Endothelial cell of umbilical vein (primary cell): ENCODE measurements at regions of chr12 and their contacts with region 1.

Region 1: GRCh38 chr12:132956011-132956788 is at the start of gene ZNF605:
- DNase-seq: peak; percentile 91
- H3K4me3 ChIP-seq: peak within 1 kb of the TSS; percentile 58 to 83 (median 75)
- H3K27ac ChIP-seq: peak within 1 kb of the TSS; percentile 50
- H3K4me1 ChIP-seq: peaks cover 8% of the 10 kb centered on the region
- H3K27me3 ChIP-seq: no peaks in the 10 kb centered on the region
- CTCF ChIP-seq: no peak
- POLR2A ChIP-seq: no peak
- total RNA-seq, gene ZNF605: 11.0 and 11.3 TPM in 2 replicates

Region 2: DNA sequence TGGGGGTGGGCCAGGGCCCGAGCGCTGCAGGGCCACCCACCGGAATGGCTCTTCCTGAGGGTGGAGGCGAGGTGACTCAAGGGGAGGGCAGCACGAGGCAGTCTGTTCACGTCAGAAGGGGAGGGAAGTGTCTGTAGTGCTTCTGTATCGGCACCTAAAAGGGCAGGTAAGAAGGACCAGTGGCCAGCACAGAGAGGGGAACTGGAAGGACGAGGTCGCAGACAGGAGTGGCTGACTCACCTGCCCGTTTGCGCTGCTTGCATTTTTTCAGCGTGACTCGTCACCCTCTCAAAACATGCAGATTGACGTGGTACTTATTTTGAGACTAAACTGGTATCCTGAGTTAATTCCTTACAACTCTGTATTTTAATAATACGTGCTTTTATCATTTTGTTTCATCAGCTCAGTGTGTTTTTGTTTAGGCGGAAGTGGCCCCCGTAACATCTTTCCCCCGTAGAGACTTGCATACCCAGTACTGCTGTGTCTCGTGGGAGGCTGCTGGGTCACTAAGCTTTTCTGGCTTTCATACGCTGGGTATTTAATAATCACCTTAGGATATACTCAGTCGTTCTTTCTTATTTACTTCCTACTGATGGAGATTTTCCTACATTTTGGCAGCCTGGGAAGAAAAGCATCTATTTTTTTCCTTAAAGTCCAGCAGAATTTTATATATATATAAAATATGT is 1218.9 kb before region 1 on chr12:
- CTCF ChIA-PET with region 1: no interaction called
- POLR2A ChIA-PET with region 1: interaction called, 10 read pairs
- dilution Hi-C with region 1: no loop called
- intact Hi-C with region 1: no loop called
- DNase-seq: peak; percentile 29
- H3K4me3 ChIP-seq: peak overlapping the region in 1 of 3 experiments; percentile 19
- H3K27ac ChIP-seq: peak overlapping the region; percentile 61
- H3K4me1 ChIP-seq: peaks cover 10% of the 10 kb centered on the region
- H3K27me3 ChIP-seq: no peaks in the 10 kb centered on the region
- CTCF ChIP-seq: no peak
- POLR2A ChIP-seq: no peak

Region 3: DNA sequence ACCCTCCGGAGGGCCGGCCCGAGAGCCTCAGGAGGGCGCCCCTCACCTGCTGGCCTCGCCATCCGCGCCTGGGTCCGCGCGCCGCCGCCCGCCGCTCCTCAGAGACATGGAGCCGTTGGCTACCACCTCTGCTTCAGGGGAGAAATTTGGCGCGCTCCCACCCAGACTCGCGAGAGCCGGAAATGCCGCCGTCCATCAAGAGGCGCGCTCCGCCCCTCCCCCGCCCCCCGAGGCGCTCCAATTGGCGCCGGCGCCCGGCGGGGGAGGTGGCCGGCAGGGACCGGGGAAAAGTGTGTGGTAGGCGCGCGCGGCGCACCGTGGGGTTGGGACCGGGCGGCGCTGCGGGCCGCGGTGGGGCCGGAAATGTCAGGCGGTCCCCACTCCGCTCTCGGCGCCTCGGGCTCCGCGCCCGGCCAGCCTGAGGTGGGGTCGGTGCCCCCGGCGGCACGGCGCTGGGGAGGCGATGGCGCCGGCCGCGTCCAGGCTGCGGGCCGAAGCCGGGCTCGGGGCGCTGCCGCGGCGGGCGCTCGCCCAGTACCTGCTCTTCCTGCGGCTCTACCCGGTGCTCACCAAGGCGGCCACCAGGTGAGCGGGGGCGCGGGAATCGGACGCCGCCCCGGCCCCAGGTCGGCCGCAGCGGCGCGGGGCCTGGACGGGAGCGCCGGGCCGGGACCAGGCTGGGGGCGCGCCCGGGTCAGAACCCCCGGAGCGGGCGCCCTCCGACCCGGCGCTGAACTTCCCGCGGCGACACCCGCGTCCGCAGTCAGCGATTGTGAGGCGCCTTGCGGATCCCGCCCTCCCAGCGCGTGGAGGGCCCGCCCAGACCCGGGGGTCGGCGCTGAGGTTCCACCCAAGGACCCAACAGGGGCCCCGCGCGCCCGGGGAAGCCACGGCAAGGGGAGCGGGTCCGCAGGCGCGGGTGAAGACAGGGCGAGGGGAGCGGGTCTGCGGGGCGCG is 268.7 kb before region 1 on chr12 and contains the starts of genes POLE and PXMP2:
- CTCF ChIA-PET with region 1: no interaction called
- POLR2A ChIA-PET with region 1: no interaction called
- dilution Hi-C with region 1: no loop called
- intact Hi-C with region 1: no loop called
- DNase-seq: peak; percentile 92
- H3K4me3 ChIP-seq: peak within 1 kb of the TSS; percentile 37 to 77 (median 62)
- H3K27ac ChIP-seq: peak within 1 kb of the TSS; percentile 62
- H3K4me1 ChIP-seq: no peaks in the 10 kb centered on the region
- H3K27me3 ChIP-seq: no peaks in the 10 kb centered on the region
- CTCF ChIP-seq: no peak
- POLR2A ChIP-seq: peak; percentile 70
- total RNA-seq, gene POLE: 73.7 and 82.7 TPM in 2 replicates
- total RNA-seq, gene PXMP2: 21.1 and 24.0 TPM in 2 replicates

Region 4: DNA sequence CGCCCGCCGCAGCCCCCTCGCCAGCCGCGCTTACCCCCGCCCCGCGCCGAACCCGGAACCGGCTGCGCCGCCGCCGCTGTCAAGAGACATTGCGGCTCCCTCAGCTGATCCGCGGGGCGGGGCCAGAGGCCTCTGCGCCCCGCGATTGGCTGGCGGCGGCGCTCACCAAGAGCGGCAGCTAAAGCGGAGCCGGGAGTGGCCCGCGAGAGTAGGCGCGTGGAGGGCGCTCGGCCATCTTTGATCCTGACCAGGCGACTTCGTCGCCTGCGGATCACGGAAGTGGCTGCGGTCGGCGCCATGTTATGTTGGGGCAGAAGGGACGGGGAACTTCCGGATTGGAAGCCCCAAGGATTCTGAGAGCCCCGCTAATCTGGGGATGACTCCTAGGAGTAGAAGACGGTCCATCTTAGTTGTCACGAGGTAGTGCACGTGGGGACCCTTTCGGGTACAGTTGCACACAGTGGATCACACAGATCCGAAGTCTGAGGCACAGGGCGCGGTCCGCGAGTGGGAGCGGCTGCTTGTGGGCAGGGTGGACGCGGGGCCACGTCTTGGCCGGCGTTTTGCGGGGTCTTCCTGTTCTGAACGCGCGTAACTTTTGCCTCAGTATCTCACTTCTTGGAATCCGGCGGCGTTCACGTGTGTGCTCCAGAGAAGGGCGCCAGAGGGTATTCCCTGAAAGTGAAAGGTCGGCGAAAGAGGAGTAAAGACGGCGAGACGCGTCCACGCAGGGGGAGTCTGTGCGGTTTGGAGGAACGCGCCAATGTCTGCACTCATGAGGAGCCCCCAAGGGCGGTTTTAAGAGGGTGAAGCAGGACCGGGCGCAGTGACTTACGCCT is 68.5 kb before region 1 on chr12 and contains the start of gene CHFR:
- CTCF ChIA-PET with region 1: no interaction called
- POLR2A ChIA-PET with region 1: no interaction called
- dilution Hi-C with region 1: no loop called
- intact Hi-C with region 1: loop called (anchors 2 kb)
- DNase-seq: peak; percentile 97
- H3K4me3 ChIP-seq: peak within 1 kb of the TSS; percentile 52 to 90 (median 67)
- H3K27ac ChIP-seq: peak within 1 kb of the TSS; percentile 69
- H3K4me1 ChIP-seq: no peaks in the 10 kb centered on the region
- H3K27me3 ChIP-seq: no peaks in the 10 kb centered on the region
- CTCF ChIP-seq: no peak
- POLR2A ChIP-seq: peak; percentile 65
- total RNA-seq, gene CHFR: 64.7 and 66.5 TPM in 2 replicates

Region 5: GRCh38 chr12:132986001-132986912 is 30.1 kb after region 1 on chr12 and contains the start of gene ZNF26:
- CTCF ChIA-PET with region 1: no interaction called
- POLR2A ChIA-PET with region 1: no interaction called
- dilution Hi-C with region 1: no loop called
- intact Hi-C with region 1: loop called (anchors 1 kb)
- DNase-seq: peak; percentile 94
- H3K4me3 ChIP-seq: peak within 1 kb of the TSS; percentile 16 to 91 (median 61)
- H3K27ac ChIP-seq: peak within 1 kb of the TSS; percentile 59
- H3K4me1 ChIP-seq: peaks cover 11% of the 10 kb centered on the region
- H3K27me3 ChIP-seq: no peaks in the 10 kb centered on the region
- CTCF ChIP-seq: no peak
- POLR2A ChIP-seq: peak; percentile 74
- total RNA-seq, gene ZNF26: 9.7 and 11.1 TPM in 2 replicates

Region 6: GRCh38 chr12:133181238-133181959 is 225.2 kb after region 1 on chr12 and contains the start of gene ZNF268:
- CTCF ChIA-PET with region 1: no interaction called
- POLR2A ChIA-PET with region 1: no interaction called
- dilution Hi-C with region 1: no loop called
- intact Hi-C with region 1: loop called (anchors 1 kb)
- DNase-seq: peak; percentile 91
- H3K4me3 ChIP-seq: peak within 1 kb of the TSS; percentile 27 to 88 (median 68)
- H3K27ac ChIP-seq: peak within 1 kb of the TSS; percentile 31
- H3K4me1 ChIP-seq: peaks cover 3% of the 10 kb centered on the region
- H3K27me3 ChIP-seq: no peaks in the 10 kb centered on the region
- CTCF ChIP-seq: peak; percentile 83 to 88
- POLR2A ChIP-seq: peak; percentile 77
- total RNA-seq, gene ZNF268: 17.3 and 18.2 TPM in 2 replicates